ENCODE measurements at regions of chr15 and their contacts with region 1.

Region 1: DNA sequence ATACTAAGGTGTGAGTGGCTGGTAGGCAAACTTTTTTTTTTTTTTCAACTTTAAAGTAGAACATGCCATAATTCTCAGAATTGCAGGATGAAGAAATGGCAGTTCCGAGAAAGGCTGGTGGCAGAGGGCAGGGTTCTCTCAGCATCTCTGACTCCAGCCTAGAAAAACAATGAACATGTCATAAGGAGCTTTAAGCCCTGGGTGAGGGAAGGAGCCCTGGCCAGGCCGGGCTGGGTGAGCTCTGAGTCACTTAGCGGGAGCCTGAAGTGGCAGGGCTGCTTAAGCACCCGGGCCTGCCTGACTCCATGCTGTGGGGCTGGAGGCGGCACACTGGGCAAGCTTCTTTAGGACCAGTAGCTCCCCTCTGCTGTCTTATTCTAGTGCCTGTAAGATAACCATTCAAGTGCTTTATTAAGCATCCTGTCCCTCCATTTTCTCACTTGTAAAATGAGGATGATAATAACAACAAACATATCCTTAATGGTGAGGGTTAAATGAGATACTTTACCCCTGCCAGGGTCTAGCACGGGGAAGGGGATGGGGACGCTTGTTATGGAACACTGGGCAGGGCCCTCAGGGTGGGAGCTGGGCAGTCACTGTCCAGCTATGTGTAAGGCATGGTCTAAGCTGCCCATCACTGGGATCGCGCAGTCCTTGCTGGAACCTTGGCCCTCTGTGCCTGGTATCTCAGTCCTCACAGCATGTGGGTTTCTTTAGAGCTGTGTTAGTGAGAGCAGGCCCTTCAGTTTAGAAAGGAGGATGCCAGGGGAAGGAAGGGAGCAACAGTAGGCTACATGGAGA is 18.4 kb downstream of the SMAD6 start:
- DNase-seq: peak; percentile 56
- H3K4me3 ChIP-seq: no peak overlapping the region
- H3K27ac ChIP-seq: peak overlapping the region; percentile 11
- H3K4me1 ChIP-seq: peaks cover 53% of the 10 kb centered on the region
- H3K27me3 ChIP-seq: no peaks in the 10 kb centered on the region
- CTCF ChIP-seq: no peak
- POLR2A ChIP-seq: no peak

Region 2: DNA sequence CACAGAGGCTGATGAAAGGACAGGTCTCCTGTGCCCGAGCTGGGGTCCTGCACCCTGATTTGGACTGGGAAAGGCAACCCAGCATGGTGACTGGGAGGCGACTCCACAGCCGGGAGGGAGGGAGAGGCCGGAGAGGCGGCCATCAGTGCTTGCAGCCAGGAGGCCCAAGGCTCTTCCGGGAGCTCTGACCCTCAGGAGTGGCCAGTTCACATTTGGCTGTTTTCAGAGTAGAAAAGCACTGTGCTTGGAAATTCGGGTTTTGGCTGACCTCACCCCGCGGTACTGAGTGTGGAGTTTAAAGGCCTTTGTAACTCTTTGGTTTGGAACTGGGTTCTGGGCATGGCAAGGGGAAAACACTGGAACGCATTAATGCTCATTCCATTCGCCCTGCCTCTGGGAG is 13.6 kb after region 1 on chr15:
- CTCF ChIA-PET with region 1: interaction called, 11 read pairs
- POLR2A ChIA-PET with region 1: interaction called, 5 read pairs
- dilution Hi-C with region 1: no loop called
- intact Hi-C with region 1: no loop called
- DNase-seq: no peak
- H3K4me3 ChIP-seq: no peak overlapping the region
- H3K27ac ChIP-seq: peak overlapping the region; percentile 9
- H3K4me1 ChIP-seq: peaks cover 42% of the 10 kb centered on the region
- H3K27me3 ChIP-seq: no peaks in the 10 kb centered on the region
- CTCF ChIP-seq: no peak
- POLR2A ChIP-seq: no peak

Measured in endothelial cell of umbilical vein (primary cell).